ENCODE measurements at regions of chr14 and their contacts with region 1.

Region 1: GRCh38 chr14:36647824-36648753 is 13.6 kb upstream of the PAX9 start:
- DNase-seq: peak; percentile 29
- ATAC-seq: peak; percentile 85

Region 2: DNA sequence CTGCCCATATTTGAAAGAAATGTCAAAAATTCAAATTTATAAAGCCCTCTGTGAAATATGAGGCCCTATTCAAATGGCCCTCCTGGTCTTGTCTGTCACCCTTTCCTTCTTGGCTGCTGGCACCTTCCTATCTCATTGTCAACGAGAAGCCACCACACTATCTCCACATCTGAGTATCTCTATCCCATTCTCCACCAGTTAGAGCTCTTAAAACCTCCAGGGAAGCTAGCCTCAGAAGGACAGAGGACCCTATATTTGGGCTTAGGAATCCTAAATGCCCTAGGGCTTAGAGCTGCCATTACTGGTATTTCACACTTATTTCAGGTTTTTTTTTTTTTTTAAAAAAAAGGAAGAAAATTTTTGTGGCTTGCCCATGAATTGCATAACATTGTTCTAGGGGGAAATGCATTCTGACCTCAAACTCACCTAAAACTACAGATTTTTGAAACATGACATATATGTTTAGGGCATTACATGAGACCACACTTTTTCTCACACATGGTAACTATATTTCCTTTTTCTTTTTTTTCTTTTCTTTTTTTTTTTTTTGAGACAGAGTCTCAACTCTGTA is 499.3 kb after region 1 on chr14:
- intact Hi-C with region 1: loop called (anchors 5 kb)
- DNase-seq: no peak
- ATAC-seq: no peak

Measured in left ventricle myocardium superior (tissue), 1 donor.